IMR-90 (cell line): ENCODE measurements at regions of chr4 and their contacts with region 1.

Region 1: GRCh38 chr4:87235020-87235671 is 14.7 kb upstream of the KLHL8 start:
- DNase-seq: peak; percentile 62
- ATAC-seq: peak; percentile 54
- H3K4me3 ChIP-seq: peak overlapping the region; percentile 72; the same call in 1 of the 2 replicates
- H3K27ac ChIP-seq: no peak overlapping the region
- H3K4me1 ChIP-seq: peaks cover 6% of the 10 kb centered on the region
- H3K27me3 ChIP-seq: no peaks in the 10 kb centered on the region
- CTCF ChIP-seq: no peak
- POLR2A ChIP-seq: no peak
- RAD21 ChIP-seq: no peak

Region 2: GRCh38 chr4:86497980-86498862 is 736.9 kb before region 1 on chr4:
- CTCF ChIA-PET with region 1: no interaction called
- POLR2A ChIA-PET with region 1: no interaction called
- dilution Hi-C with region 1: no loop called
- in situ Hi-C with region 1: loop called (anchors 25 kb)
- intact Hi-C with region 1: loop called (anchors 5 kb)
- DNase-seq: peak; percentile 68
- ATAC-seq: peak; percentile 94
- H3K4me3 ChIP-seq: no peak overlapping the region
- H3K27ac ChIP-seq: no peak overlapping the region
- H3K4me1 ChIP-seq: peaks cover 3% of the 10 kb centered on the region; the same call in 1 of the 2 replicates
- H3K27me3 ChIP-seq: no peaks in the 10 kb centered on the region
- CTCF ChIP-seq: peak; percentile 79
- POLR2A ChIP-seq: no peak
- RAD21 ChIP-seq: peak; percentile 71

Region 3: GRCh38 chr4:86522349-86522748 is 712.8 kb before region 1 on chr4:
- CTCF ChIA-PET with region 1: no interaction called
- POLR2A ChIA-PET with region 1: no interaction called
- dilution Hi-C with region 1: no loop called
- in situ Hi-C with region 1: loop called (anchors 25 kb)
- intact Hi-C with region 1: no loop called
- DNase-seq: no peak
- ATAC-seq: no peak
- H3K4me3 ChIP-seq: no peak overlapping the region
- H3K27ac ChIP-seq: no peak overlapping the region
- H3K4me1 ChIP-seq: no peaks in the 10 kb centered on the region
- H3K27me3 ChIP-seq: peaks cover 2% of the 10 kb centered on the region; the same call in 1 of the 2 replicates
- CTCF ChIP-seq: peak; percentile 39
- POLR2A ChIP-seq: no peak
- RAD21 ChIP-seq: peak; percentile 47

Region 4: DNA sequence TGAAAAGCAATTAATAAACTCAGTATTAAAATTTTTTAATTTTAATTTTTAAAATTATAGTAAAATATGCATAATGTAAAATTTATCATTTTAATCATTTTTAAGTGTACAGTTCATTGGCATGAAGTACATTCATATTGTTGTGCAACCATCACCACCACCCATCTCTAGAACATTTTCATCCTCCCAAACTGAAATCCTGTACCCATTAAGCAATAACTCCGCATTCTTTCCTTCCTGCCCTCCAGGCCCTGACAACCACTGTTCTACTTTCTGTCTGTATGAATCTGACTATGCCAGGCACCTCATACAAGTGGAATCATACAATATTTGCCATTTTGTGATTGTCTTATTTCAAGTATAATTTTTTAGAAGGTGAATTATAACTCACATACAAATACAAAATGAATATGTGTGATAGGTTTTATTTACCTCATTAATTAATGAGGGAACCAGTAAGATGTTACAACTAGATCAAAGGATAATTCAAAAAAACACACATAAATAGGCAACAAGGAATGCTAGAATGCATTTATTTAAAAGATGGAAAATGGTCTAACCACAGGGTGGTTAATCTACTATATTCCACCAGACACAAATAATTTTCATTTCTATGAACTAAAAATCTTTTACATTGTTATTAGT is 313.4 kb before region 1 on chr4:
- CTCF ChIA-PET with region 1: interaction called, 5 read pairs
- POLR2A ChIA-PET with region 1: no interaction called
- dilution Hi-C with region 1: no loop called
- in situ Hi-C with region 1: loop called (anchors 5 kb)
- intact Hi-C with region 1: loop called (anchors 1 kb)
- DNase-seq: no peak
- ATAC-seq: no peak
- H3K4me3 ChIP-seq: no peak overlapping the region
- H3K27ac ChIP-seq: no peak overlapping the region
- H3K4me1 ChIP-seq: peaks cover 4% of the 10 kb centered on the region; the same call in 1 of the 2 replicates
- H3K27me3 ChIP-seq: no peaks in the 10 kb centered on the region
- CTCF ChIP-seq: no peak
- POLR2A ChIP-seq: no peak
- RAD21 ChIP-seq: no peak

Region 5: DNA sequence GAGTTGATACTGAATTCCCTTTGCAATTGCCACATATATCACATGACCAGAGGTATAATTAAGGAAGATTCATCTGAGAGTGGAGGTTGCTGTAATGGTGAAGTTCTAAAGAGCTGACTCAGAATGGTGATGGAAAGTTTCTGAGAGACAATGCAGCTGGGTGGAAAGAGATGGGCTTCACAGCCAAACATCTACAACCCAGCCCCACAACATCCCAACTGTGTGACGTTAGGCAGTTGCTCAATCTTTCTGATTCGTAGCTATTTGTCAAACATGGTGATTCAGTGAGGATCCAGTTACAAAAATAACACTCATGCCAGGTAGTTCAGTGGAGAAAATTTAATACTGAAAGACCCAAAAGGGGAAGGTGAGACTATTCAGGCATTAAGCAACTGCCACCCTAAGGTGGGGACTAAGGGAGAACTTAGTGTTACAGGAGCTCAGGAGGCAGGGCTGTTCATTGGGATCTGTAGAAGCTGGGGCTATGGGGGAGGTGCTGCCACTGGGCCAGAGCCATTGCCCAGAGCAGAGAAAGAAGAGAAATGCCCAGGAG is 307.2 kb before region 1 on chr4:
- CTCF ChIA-PET with region 1: interaction called, 5 read pairs
- POLR2A ChIA-PET with region 1: no interaction called
- dilution Hi-C with region 1: no loop called
- in situ Hi-C with region 1: loop called (anchors 5 kb)
- intact Hi-C with region 1: no loop called
- DNase-seq: peak; percentile 99
- ATAC-seq: peak; percentile 80
- H3K4me3 ChIP-seq: no peak overlapping the region
- H3K27ac ChIP-seq: peak overlapping the region; percentile 73
- H3K4me1 ChIP-seq: peaks cover 9% of the 10 kb centered on the region
- H3K27me3 ChIP-seq: no peaks in the 10 kb centered on the region
- CTCF ChIP-seq: no peak
- POLR2A ChIP-seq: no peak
- RAD21 ChIP-seq: no peak

Region 6: GRCh38 chr4:87150498-87151261 is 84.5 kb before region 1 on chr4:
- CTCF ChIA-PET with region 1: interaction called, 8 read pairs
- POLR2A ChIA-PET with region 1: no interaction called
- dilution Hi-C with region 1: no loop called
- in situ Hi-C with region 1: no loop called
- intact Hi-C with region 1: loop called (anchors 1 kb)
- DNase-seq: peak; percentile 71
- ATAC-seq: peak; percentile 89
- H3K4me3 ChIP-seq: no peak overlapping the region
- H3K27ac ChIP-seq: no peak overlapping the region
- H3K4me1 ChIP-seq: no peaks in the 10 kb centered on the region
- H3K27me3 ChIP-seq: no peaks in the 10 kb centered on the region
- CTCF ChIP-seq: peak; percentile 82
- POLR2A ChIP-seq: no peak
- RAD21 ChIP-seq: peak; percentile 80

Region 7: DNA sequence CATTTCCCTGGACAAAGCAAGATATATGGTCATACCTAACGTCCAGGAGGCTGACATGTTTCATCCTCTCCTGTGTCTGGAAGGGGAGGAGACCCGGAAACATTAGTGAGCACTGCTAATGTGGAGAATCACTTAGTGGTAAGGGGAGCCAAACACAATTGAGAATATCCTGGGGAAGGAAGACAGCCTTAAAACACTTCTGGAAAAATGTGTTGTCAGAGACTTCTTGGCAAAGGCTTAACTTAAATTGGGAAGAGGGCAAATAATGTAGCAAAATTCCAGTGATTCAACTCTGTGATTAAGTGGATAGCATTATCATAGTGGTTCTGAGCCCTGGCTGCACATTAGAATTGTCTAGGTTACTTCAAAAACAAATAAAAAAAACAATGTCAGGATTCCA is 254.5 kb after region 1 on chr4:
- CTCF ChIA-PET with region 1: no interaction called
- POLR2A ChIA-PET with region 1: interaction called, 11 read pairs
- dilution Hi-C with region 1: no loop called
- in situ Hi-C with region 1: no loop called
- intact Hi-C with region 1: no loop called
- DNase-seq: no peak
- ATAC-seq: no peak
- H3K4me3 ChIP-seq: no peak overlapping the region
- H3K27ac ChIP-seq: no peak overlapping the region
- H3K4me1 ChIP-seq: no peaks in the 10 kb centered on the region
- H3K27me3 ChIP-seq: no peaks in the 10 kb centered on the region
- CTCF ChIP-seq: no peak
- POLR2A ChIP-seq: no peak
- RAD21 ChIP-seq: no peak